ENCODE measurements at regions of chr20 and their contacts with region 1.

Region 1: DNA sequence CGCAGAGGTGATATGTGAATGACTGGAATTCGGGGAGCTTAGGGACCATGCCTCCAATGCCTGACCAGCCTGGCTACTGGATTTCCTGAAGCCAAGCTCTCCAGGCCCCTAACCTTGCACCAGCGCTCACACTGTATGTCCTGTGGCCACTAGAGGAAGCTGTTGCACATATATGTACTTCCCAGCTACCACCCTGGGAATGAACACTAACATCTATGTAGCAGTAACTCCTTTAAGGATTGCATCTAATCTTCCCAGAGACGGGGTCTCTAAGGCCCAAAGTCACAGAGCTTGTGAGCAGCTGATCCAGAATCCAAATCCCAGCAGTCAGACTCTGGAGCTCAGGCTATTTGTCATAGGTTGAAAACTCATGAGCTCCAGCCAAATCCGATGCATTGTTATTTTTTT is 20.4 kb upstream of the BPIFB1 start:
- DNase-seq: peak; percentile 31
- ATAC-seq: peak; percentile 47
- H3K4me3 Mint-ChIP-seq: no peak overlapping the region
- H3K27ac Mint-ChIP-seq: no peak overlapping the region
- H3K4me1 Mint-ChIP-seq: no peaks in the 10 kb centered on the region
- H3K27me3 Mint-ChIP-seq: peaks cover 14% of the 10 kb centered on the region

Region 2: DNA sequence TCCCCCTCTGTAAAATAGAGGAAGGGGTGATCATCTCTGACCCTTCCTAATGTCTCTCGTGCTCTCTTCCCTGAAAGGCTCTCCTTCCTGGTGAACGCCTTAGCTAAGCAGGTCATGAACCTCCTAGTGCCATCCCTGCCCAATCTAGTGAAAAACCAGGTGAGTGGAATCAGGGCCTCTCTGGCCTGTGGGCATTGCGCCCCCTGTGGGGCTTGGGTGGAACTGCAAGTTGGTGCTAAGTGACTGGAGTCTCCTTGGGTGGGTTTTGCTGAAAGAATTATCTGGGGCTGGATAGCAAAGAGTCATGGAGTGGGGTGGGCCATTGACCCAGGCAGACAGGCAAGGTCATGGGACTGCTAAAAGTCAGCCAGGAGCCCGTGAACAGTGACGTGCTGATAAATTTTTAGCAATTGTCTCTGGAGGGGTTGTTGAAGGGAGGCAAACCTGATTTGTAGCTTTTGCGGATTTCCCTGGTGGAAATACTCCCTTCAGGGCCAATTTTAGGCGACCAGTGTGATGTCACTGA is 29.2 kb after region 1 on chr20:
- CTCF ChIA-PET with region 1: interaction called, 15 read pairs
- POLR2A ChIA-PET with region 1: no interaction called
- intact Hi-C with region 1: no loop called
- DNase-seq: peak; percentile 79
- ATAC-seq: peak; percentile 63
- H3K4me3 Mint-ChIP-seq: no peak overlapping the region
- H3K27ac Mint-ChIP-seq: no peak overlapping the region
- H3K4me1 Mint-ChIP-seq: no peaks in the 10 kb centered on the region
- H3K27me3 Mint-ChIP-seq: no peaks in the 10 kb centered on the region

Region 3: GRCh38 chr20:33299111-33299603 is 36.5 kb after region 1 on chr20:
- CTCF ChIA-PET with region 1: interaction called, 15 read pairs
- POLR2A ChIA-PET with region 1: no interaction called
- intact Hi-C with region 1: loop called in 1 of 2 experiments (anchors 2 kb)
- DNase-seq: peak; percentile 84
- ATAC-seq: peak; percentile 90
- H3K4me3 Mint-ChIP-seq: no peak overlapping the region
- H3K27ac Mint-ChIP-seq: no peak overlapping the region
- H3K4me1 Mint-ChIP-seq: no peaks in the 10 kb centered on the region
- H3K27me3 Mint-ChIP-seq: peaks cover 6% of the 10 kb centered on the region